ENCODE measurements at regions of chr11 and their contacts with region 1.

Region 1: GRCh38 chr11:33257897-33258630 is 883 bp downstream of the HIPK3 start:
- DNase-seq: peak; percentile 67 to 83 (median 76)
- ATAC-seq: peak; percentile 71
- H3K4me3 ChIP-seq: peak overlapping the region; percentile 63
- H3K4me3 Mint-ChIP-seq: peak overlapping the region; percentile 89 to 99 (median 96)
- H3K27ac ChIP-seq: peak overlapping the region; percentile 97
- H3K27ac Mint-ChIP-seq: peak overlapping the region; percentile 93 to 99 (median 98)
- H3K4me1 ChIP-seq: peaks cover 27 to 28% of the 10 kb centered on the region in 2 donors
- H3K4me1 Mint-ChIP-seq: peaks cover 25 to 55% (median 44%) of the 10 kb centered on the region in 7 donors
- H3K27me3 ChIP-seq: no peaks in the 10 kb centered on the region
- H3K27me3 Mint-ChIP-seq: peaks cover 0 to 2% (median 0%) of the 10 kb centered on the region in 5 donors

Region 2: GRCh38 chr11:31369348-31370329 is 1888.4 kb before region 1 on chr11 and contains the starts of genes DCDC1 and DNAJC24:
- CTCF ChIA-PET with region 1: no interaction called
- POLR2A ChIA-PET with region 1: no interaction called
- intact Hi-C with region 1: loop called (anchors 5 kb)
- DNase-seq: peak; percentile 84 to 90 (median 89)
- ATAC-seq: peak; percentile 99
- H3K4me3 ChIP-seq: peak within 1 kb of the TSS; percentile 96
- H3K4me3 Mint-ChIP-seq: peak within 1 kb of the TSS; percentile 93 to 100 (median 98)
- H3K27ac ChIP-seq: peak within 1 kb of the TSS; percentile 81
- H3K27ac Mint-ChIP-seq: peak within 1 kb of the TSS; percentile 90 to 97 (median 95)
- H3K4me1 ChIP-seq: peaks cover 21 to 31% of the 10 kb centered on the region in 2 donors
- H3K4me1 Mint-ChIP-seq: peaks cover 28 to 82% (median 66%) of the 10 kb centered on the region in 7 donors
- H3K27me3 ChIP-seq: no peaks in the 10 kb centered on the region
- H3K27me3 Mint-ChIP-seq: peaks cover 0 to 18% (median 0%) of the 10 kb centered on the region in 5 donors
- total RNA-seq, gene DCDC1: 0.13 to 0.81 (median 0.26) TPM in 4 of 5 experiments, not detected in the other
- total RNA-seq, gene DNAJC24: 12.2 to 26.3 (median 18.6) TPM

Region 3: DNA sequence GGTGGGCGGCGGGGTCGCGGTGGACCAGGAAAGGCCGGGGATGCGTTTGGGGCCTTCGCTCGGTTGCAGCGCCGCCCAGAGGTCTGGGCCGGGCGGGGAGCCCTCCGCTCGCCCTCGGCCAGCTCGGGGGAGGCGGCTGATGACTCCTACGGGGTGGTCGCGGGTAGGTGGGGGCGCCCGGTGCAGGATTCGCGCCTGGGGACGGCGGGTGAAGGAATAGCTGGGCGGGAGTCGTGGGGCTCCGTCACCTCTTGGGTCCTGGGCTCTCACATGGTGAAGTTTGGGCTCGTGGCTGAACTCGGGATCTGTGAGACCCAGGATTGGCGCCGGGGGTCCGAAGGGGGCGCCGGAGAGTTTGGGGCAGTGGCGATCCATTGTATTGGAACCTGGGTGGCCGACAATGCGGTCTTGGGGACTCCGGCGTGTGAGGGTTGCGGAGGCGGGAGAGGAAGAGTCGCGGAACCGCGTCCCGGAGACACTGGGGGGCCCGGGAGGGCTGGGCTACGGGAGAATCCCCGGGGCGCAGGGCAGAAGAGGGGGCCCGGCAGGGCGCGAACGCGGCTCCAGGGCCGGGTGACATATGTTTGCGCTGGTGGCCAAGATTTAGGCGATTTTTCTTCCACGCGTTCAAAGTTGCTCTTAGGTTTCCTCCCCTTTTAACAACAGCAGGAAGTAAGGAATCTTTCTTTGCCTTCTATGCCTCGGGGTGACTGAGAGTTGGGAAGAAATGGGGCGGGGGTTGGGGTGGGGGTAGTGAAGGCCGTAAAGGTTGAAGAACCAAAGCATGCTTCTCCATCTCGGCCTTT is 364.5 kb before region 1 on chr11:
- CTCF ChIA-PET with region 1: no interaction called
- POLR2A ChIA-PET with region 1: no interaction called
- intact Hi-C with region 1: loop called (anchors 1 to 5 kb)
- DNase-seq: peak in 6 of 9 donors; percentile 34 to 67 (median 42)
- ATAC-seq: peak; percentile 47
- H3K4me3 ChIP-seq: peak overlapping the region; percentile 71
- H3K4me3 Mint-ChIP-seq: peak overlapping the region; percentile 83 to 96 (median 94)
- H3K27ac ChIP-seq: peak overlapping the region; percentile 71
- H3K27ac Mint-ChIP-seq: peak overlapping the region; percentile 58 to 95 (median 80)
- H3K4me1 ChIP-seq: peaks cover 5 to 15% of the 10 kb centered on the region in 2 donors
- H3K4me1 Mint-ChIP-seq: peaks cover 26 to 46% (median 38%) of the 10 kb centered on the region in 7 donors
- H3K27me3 ChIP-seq: no peaks in the 10 kb centered on the region
- H3K27me3 Mint-ChIP-seq: peaks cover 0 to 21% (median 0%) of the 10 kb centered on the region in 5 donors

Region 4: DNA sequence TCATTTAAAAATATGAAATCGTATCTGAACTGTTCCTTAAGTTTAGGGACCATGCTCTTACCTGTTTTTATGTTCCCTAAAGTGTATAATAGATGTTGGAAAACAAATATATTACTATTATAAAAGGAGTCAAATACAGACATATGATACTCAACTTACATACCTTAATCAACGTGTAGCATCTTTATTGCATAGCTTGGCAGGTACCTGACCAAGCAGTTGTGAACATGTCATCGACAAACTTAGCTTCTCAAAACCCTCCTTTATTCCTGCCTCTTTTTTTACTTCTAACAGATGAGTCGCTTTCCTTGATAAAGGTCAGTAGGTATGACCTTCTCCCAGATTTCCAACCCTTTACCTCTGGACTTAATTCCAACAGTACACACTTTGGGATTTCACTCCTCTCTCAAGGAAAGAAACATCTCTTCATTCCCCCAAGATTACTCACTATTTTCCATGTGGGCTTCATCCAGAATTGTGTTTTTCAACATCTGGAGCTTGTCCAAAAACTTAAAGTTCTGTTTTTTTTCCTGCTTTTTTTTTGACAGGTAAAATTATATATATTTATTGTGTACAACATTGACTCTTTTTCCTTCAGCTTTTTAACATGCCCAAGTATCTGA is 11.0 kb after region 1 on chr11:
- CTCF ChIA-PET with region 1: interaction called, 4 read pairs
- POLR2A ChIA-PET with region 1: interaction called, 6 read pairs
- intact Hi-C with region 1: loop called in 1 of 2 experiments (anchors 1 kb)
- DNase-seq: no peak
- ATAC-seq: no peak
- H3K4me3 ChIP-seq: no peak overlapping the region
- H3K4me3 Mint-ChIP-seq: peak overlapping the region in 1 of 10 donors; percentile 12
- H3K27ac ChIP-seq: no peak overlapping the region
- H3K27ac Mint-ChIP-seq: no peak overlapping the region
- H3K4me1 ChIP-seq: peaks cover 4 to 6% of the 10 kb centered on the region in 2 donors
- H3K4me1 Mint-ChIP-seq: peaks cover 16 to 53% (median 38%) of the 10 kb centered on the region in 7 donors
- H3K27me3 ChIP-seq: no peaks in the 10 kb centered on the region
- H3K27me3 Mint-ChIP-seq: no peaks in the 10 kb centered on the region

Region 5: GRCh38 chr11:33700425-33701271 is 442.6 kb after region 1 on chr11 and contains the start of gene C11orf91:
- CTCF ChIA-PET with region 1: no interaction called
- POLR2A ChIA-PET with region 1: interaction called, 3 read pairs
- intact Hi-C with region 1: loop called (anchors 2 kb)
- DNase-seq: peak; percentile 88 to 98 (median 95)
- ATAC-seq: peak; percentile 99
- H3K4me3 ChIP-seq: peak within 1 kb of the TSS; percentile 54
- H3K4me3 Mint-ChIP-seq: peak within 1 kb of the TSS; percentile 84 to 96 (median 92)
- H3K27ac ChIP-seq: no peak within 1 kb of the TSS
- H3K27ac Mint-ChIP-seq: peak within 1 kb of the TSS; percentile 61 to 84 (median 76)
- H3K4me1 ChIP-seq: peaks cover 9 to 13% of the 10 kb centered on the region in 2 donors
- H3K4me1 Mint-ChIP-seq: peaks cover 14 to 27% (median 23%) of the 10 kb centered on the region in 7 donors
- H3K27me3 ChIP-seq: no peaks in the 10 kb centered on the region
- H3K27me3 Mint-ChIP-seq: peaks cover 0 to 31% (median 5%) of the 10 kb centered on the region in 5 donors
- total RNA-seq, gene C11orf91: not detected

Region 6: DNA sequence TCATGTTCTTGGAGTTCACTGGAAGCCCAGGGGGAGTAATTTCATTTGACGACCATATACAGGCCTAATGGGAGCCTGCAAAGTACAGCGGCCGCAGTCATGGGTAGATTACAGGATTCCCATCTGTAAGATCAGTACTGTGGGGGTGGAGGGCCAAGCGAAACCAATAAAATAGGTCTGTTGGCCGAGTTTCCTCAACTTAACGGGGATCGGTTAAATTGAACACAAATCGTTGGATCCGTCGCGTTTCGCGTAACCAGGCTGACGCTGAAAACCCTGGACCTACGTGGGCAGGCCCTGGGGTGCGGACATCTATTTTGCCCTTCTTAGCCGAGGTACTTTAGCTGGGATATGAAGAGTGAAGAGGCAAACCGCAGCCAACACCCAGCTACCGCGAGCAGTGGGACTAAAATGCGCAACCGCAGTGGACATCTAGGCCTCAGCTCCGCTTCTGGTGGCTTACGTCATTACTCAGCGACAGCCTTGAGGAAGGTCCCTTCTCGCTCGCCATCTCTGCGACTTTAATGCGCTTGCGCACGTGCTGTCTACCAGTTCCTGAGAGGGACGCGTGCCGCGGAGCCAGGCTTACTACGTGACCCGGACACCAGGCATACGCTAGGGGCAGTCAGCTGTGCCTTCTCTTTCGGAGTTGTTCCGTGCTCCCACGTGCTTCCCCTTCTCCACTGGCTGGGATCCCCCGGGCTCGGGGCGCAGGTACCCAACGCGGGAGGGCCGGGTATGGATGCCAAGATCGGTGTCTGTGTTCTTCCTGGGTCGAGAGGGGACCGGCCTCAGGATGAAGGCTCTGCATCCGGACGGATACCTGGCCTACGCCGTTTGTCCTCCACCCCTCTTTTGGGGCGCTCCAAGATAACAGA is 847.3 kb after region 1 on chr11 and contains the start of gene NAT10:
- CTCF ChIA-PET with region 1: no interaction called
- POLR2A ChIA-PET with region 1: no interaction called
- intact Hi-C with region 1: loop called in 1 of 2 experiments (anchors 5 kb)
- DNase-seq: peak; percentile 84 to 98 (median 96)
- ATAC-seq: peak; percentile 97
- H3K4me3 ChIP-seq: peak within 1 kb of the TSS; percentile 91
- H3K4me3 Mint-ChIP-seq: peak within 1 kb of the TSS; percentile 89 to 100 (median 97)
- H3K27ac ChIP-seq: peak within 1 kb of the TSS; percentile 83
- H3K27ac Mint-ChIP-seq: peak within 1 kb of the TSS; percentile 97 to 99 (median 99)
- H3K4me1 ChIP-seq: peaks cover 18 to 21% of the 10 kb centered on the region in 2 donors
- H3K4me1 Mint-ChIP-seq: peaks cover 26 to 76% (median 64%) of the 10 kb centered on the region in 7 donors
- H3K27me3 ChIP-seq: no peaks in the 10 kb centered on the region
- H3K27me3 Mint-ChIP-seq: peaks cover 0 to 5% (median 0%) of the 10 kb centered on the region in 5 donors
- total RNA-seq, gene NAT10: 55.7 to 104 (median 84.3) TPM

Measured in naive thymus-derived CD4-positive, alpha-beta T cell (primary cell).